ENCODE measurements at regions of chr1 and their contacts with region 1.

Region 1: DNA sequence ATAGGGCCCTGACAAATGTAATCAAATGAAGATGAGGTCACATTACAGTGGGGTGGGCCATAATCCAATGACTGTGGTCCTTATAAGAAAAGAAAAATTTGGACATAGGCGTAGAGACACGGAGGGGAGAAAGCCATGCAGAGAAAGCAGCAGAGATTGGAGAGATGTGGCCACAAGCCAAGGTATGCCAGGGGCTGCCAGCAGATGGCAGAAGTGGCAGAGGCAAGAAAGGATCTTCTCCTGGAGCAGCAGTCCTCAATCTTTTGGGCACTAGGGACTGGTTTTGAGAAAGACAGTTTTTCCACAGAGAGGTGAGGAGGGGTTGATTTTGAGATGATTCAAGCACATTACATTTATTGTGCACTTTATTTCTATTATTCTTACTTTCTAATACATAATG is 355.1 kb downstream of the NPHP4 start:
- DNase-seq: peak; percentile 44
- H3K4me3 Mint-ChIP-seq: no peak overlapping the region
- H3K27ac Mint-ChIP-seq: no peak overlapping the region
- H3K4me1 Mint-ChIP-seq: no peaks in the 10 kb centered on the region
- H3K27me3 Mint-ChIP-seq: peaks cover 19% of the 10 kb centered on the region

Region 2: GRCh38 chr1:5444396-5444795 is 192.8 kb before region 1 on chr1:
- CTCF ChIA-PET with region 1: no interaction called
- intact Hi-C with region 1: no loop called
- DNase-seq: no peak
- H3K4me3 Mint-ChIP-seq: no peak overlapping the region
- H3K27ac Mint-ChIP-seq: no peak overlapping the region
- H3K4me1 Mint-ChIP-seq: peaks cover 2% of the 10 kb centered on the region
- H3K27me3 Mint-ChIP-seq: no peaks in the 10 kb centered on the region

Region 3: GRCh38 chr1:5565281-5566125 is 71.7 kb before region 1 on chr1:
- CTCF ChIA-PET with region 1: no interaction called
- intact Hi-C with region 1: no loop called
- DNase-seq: no peak
- H3K4me3 Mint-ChIP-seq: no peak overlapping the region
- H3K27ac Mint-ChIP-seq: no peak overlapping the region
- H3K4me1 Mint-ChIP-seq: no peaks in the 10 kb centered on the region
- H3K27me3 Mint-ChIP-seq: peaks cover 3% of the 10 kb centered on the region

Region 4: DNA sequence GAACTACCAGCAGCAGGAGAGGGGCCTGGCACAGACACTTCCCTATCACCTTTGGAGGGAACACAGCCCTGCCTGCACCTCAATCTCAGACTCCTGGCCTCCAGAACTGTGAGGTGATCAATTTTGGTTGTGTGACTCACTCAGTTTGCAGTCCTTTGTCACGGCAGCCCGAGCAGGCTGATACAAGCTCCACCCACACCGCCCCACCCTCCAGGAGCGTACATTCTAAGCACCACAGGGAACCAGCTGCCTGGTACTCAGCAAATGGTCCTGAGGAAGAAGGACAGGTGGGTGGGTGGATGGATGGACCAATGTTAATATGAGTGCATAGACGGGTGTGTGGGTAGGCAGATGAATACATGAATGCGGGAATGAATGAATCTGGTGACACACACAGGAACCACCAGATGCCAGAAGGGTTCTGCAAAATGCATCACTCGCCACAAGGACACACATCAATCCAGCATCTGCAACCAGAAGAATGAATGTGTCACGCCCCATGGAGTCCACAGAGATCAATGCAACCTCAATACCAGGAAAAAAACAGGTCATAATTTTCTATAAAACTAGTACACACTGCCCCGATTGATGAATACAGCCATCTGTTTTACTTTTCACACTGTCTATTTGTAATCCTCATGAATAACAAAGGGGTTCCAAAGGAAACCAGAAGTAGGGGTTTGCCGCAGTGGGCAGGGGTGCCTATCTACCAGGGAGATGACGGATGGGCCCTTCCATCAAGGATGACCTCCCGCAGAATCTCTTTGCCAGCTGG is 70.6 kb after region 1 on chr1:
- CTCF ChIA-PET with region 1: no interaction called
- intact Hi-C with region 1: no loop called
- DNase-seq: no peak
- H3K4me3 Mint-ChIP-seq: no peak overlapping the region
- H3K27ac Mint-ChIP-seq: no peak overlapping the region
- H3K4me1 Mint-ChIP-seq: no peaks in the 10 kb centered on the region
- H3K27me3 Mint-ChIP-seq: peaks cover 4% of the 10 kb centered on the region

Region 5: DNA sequence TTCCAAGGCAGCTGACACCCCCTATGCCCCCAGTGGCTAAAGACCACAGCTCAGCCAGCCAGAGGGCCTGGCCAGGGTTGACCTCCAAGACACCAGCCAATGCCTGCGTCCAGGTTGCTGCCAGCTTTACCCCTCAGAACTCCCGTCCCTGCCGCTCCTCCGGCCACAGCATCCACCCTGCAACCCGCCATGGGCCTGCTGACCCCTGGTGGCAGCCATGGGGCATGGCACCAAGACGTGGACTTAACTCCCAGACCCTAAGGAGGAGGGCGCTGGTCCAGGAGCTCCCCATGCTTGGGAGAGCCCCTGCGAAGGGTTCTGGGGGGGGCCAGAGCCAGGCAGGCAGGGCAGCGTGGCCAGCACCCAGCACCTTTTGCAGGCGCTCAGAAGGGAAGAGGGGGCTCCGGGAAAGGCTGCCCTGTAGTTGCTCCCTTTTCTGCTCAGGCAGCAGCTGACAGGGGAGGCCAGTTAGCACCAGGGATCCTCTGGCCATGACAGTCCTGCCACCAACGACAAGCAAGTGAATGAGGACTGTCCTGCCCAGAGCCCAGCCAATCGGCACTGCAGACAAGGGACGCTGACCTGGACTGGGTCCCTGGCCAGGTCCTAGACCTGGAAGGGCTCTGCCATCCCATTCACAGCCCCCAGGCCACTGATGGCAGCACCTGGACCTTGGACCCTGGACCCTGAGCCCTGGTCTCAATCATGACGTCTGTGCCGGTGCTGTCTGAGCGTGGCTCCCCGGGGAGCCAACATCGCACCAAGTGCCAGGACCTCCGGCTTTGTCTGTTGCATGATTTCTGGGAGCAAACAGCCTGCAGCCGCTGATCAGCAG is 108.8 kb after region 1 on chr1:
- CTCF ChIA-PET with region 1: no interaction called
- intact Hi-C with region 1: loop called (anchors 1 kb)
- DNase-seq: peak; percentile 67
- H3K4me3 Mint-ChIP-seq: no peak overlapping the region
- H3K27ac Mint-ChIP-seq: no peak overlapping the region
- H3K4me1 Mint-ChIP-seq: no peaks in the 10 kb centered on the region
- H3K27me3 Mint-ChIP-seq: peaks cover 18% of the 10 kb centered on the region